Activated B cell treated with CpG ODN at 0.5 μM for 24 hours (primary cell): ENCODE measurements at regions of chr13 and their contacts with region 1.

Region 1: GRCh38 chr13:44577236-44578066 is 1.3 kb upstream of the TSC22D1 start:
- DNase-seq: peak; percentile 91
- ATAC-seq: peak; percentile 72
- H3K4me3 Mint-ChIP-seq: peak overlapping the region; percentile 93
- H3K27ac Mint-ChIP-seq: peak overlapping the region; percentile 90
- H3K4me1 Mint-ChIP-seq: peaks cover 23% of the 10 kb centered on the region
- H3K27me3 Mint-ChIP-seq: no peaks in the 10 kb centered on the region
- CTCF ChIP-seq: no peak

Region 2: DNA sequence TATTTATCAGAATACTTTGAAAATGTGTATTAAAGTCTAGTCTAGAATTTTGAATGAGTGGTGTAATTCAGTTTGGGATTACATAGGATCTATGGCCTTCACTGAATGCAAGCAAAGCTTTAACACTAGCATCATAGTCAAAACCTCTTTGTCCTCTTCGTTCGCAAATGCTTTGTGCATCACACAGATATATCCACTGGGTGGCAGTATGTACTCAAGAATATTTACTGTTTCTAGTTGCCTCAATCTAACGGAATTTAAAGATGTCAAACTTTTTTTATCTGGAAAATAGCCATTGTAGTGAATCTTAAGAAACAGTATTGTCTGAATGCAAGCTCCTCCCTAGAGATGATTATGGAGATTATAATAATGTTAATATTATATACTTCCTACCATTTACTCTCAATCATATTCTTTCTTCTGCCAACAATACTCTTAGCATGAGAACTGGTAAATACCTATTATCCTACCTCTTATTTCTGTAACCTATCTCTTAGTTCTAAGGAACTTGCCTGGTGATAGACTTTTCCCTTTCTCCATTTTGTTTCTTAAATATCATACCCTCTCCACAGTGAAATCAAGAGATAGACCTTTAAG is 671.9 kb before region 1 on chr13:
- CTCF ChIA-PET with region 1: no interaction called
- POLR2A ChIA-PET with region 1: no interaction called
- intact Hi-C with region 1: loop called (anchors 10 kb)
- DNase-seq: no peak
- ATAC-seq: peak; percentile 77
- H3K4me3 Mint-ChIP-seq: no peak overlapping the region
- H3K27ac Mint-ChIP-seq: no peak overlapping the region
- H3K4me1 Mint-ChIP-seq: no peaks in the 10 kb centered on the region
- H3K27me3 Mint-ChIP-seq: peaks cover 14% of the 10 kb centered on the region
- CTCF ChIP-seq: peak; percentile 72

Region 3: GRCh38 chr13:44484562-44485138 is 92.8 kb before region 1 on chr13:
- CTCF ChIA-PET with region 1: no interaction called
- POLR2A ChIA-PET with region 1: interaction called, 3 read pairs
- intact Hi-C with region 1: loop called (anchors 1 kb)
- DNase-seq: no peak
- ATAC-seq: peak; percentile 54
- H3K4me3 Mint-ChIP-seq: peak overlapping the region; percentile 58
- H3K27ac Mint-ChIP-seq: peak overlapping the region; percentile 30
- H3K4me1 Mint-ChIP-seq: peaks cover 21% of the 10 kb centered on the region
- H3K27me3 Mint-ChIP-seq: no peaks in the 10 kb centered on the region
- CTCF ChIP-seq: no peak

Region 4: GRCh38 chr13:45047394-45048310 is 470.2 kb after region 1 on chr13:
- CTCF ChIA-PET with region 1: no interaction called
- POLR2A ChIA-PET with region 1: no interaction called
- intact Hi-C with region 1: loop called (anchors 5 kb)
- DNase-seq: peak; percentile 51
- ATAC-seq: peak; percentile 81
- H3K4me3 Mint-ChIP-seq: peak overlapping the region; percentile 71
- H3K27ac Mint-ChIP-seq: no peak overlapping the region
- H3K4me1 Mint-ChIP-seq: peaks cover 17% of the 10 kb centered on the region
- H3K27me3 Mint-ChIP-seq: peaks cover 13% of the 10 kb centered on the region
- CTCF ChIP-seq: peak; percentile 72

Region 5: DNA sequence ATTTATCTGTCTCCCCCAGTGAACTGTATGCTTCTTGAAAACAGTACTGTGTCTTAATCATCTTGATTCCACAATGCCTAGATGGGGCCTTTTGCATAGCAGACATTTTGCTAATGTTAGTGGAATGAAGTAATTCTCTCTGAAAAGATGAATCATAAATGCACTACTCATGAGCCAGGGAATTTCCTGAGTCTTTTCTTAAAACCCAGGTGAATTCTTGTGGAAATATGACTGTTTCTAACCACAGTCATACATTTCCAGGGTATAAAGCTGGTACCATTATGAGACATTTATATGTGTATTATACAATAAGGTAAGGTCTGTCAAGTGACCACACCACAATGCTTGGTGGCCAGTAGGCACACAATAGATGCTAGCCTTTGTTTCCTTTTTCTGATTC is 628.9 kb after region 1 on chr13:
- CTCF ChIA-PET with region 1: no interaction called
- POLR2A ChIA-PET with region 1: no interaction called
- intact Hi-C with region 1: no loop called
- DNase-seq: no peak
- ATAC-seq: no peak
- H3K4me3 Mint-ChIP-seq: no peak overlapping the region
- H3K27ac Mint-ChIP-seq: peak overlapping the region; percentile 54
- H3K4me1 Mint-ChIP-seq: peaks cover 15% of the 10 kb centered on the region
- H3K27me3 Mint-ChIP-seq: no peaks in the 10 kb centered on the region
- CTCF ChIP-seq: no peak

Region 6: GRCh38 chr13:45464687-45465453 is 887.4 kb after region 1 on chr13 and contains the start of gene COG3:
- CTCF ChIA-PET with region 1: no interaction called
- POLR2A ChIA-PET with region 1: no interaction called
- intact Hi-C with region 1: loop called (anchors 2 kb)
- DNase-seq: peak; percentile 90
- ATAC-seq: peak; percentile 97
- H3K4me3 Mint-ChIP-seq: peak within 1 kb of the TSS; percentile 95
- H3K27ac Mint-ChIP-seq: peak within 1 kb of the TSS; percentile 90
- H3K4me1 Mint-ChIP-seq: peaks cover 41% of the 10 kb centered on the region
- H3K27me3 Mint-ChIP-seq: peaks cover 1% of the 10 kb centered on the region
- CTCF ChIP-seq: no peak
- total RNA-seq, gene COG3: 26.0 and 31.6 TPM in 2 replicates